ENCODE measurements at regions of chr1 and their contacts with region 1.

Region 1: DNA sequence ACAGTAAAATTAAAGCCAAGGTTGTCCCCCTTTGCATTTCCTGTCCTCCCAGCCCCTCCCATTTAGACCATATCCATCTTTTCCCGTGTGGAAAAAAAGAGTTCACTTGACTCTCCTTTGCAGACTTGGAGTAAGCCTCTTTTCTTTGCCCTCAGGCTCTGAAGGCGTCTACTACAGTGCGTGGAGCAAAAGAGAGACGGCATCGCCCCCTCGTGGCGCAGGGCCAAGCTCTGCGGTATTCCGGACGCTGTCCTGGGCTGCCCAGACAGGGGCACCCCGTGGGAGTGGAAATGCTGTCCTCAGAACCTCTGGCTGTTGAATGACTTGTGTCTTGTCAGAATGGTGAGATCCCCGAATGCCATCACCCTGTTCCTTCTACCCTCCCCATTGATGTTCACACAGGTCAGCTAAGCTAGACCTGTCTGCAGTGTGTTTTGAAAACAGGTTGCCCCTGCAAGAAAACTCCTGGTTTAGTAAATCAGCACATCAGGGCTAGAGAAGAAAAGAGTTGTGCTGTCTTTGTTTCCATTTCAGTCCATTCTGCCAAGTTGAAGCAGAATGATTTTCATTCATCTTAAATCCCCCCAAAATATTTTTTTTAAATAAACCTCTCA is 12.3 kb upstream of the GJA8 start:
- DNase-seq: peak; percentile 68
- H3K4me3 ChIP-seq: no peak overlapping the region
- H3K27ac ChIP-seq: no peak overlapping the region
- H3K4me1 ChIP-seq: no peaks in the 10 kb centered on the region
- H3K27me3 ChIP-seq: no peaks in the 10 kb centered on the region
- CTCF ChIP-seq: peak; percentile 52

Region 2: GRCh38 chr1:147273409-147274336 is 616.6 kb before region 1 on chr1:
- intact Hi-C with region 1: loop called (anchors 5 kb)
- DNase-seq: peak; percentile 26
- H3K4me3 ChIP-seq: no peak overlapping the region
- H3K27ac ChIP-seq: no peak overlapping the region
- H3K4me1 ChIP-seq: no peaks in the 10 kb centered on the region
- H3K27me3 ChIP-seq: no peaks in the 10 kb centered on the region
- CTCF ChIP-seq: peak; percentile 44

Region 3: DNA sequence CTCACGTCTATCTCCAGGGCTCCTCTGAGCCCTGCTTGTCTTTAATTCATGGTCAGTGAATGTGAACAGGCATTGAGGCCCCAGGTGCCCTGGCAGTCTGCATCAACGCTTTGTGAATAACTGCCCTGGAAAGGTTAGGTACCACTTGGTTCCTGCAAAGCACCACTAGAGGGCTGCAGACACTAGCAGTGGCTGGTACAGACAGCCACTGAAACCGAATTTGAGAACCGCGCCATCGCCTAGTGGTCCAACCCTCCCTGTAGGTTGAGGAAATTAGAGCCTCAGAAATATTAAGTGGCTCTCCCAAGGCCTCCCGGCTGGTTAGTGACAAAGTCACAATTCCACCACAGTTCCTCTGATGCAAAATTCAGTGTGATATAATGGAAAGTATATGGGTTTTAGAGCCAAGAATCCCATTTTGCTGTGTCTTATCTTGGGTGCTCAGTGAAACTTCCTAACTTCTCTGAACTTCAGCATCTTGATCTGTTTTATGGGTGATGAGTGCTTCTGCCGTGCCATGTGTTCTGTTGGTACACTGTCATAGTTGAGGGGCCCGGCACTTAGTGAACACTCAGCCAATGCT is 395.2 kb before region 1 on chr1:
- intact Hi-C with region 1: loop called (anchors 5 kb)
- DNase-seq: peak; percentile 74
- H3K4me3 ChIP-seq: no peak overlapping the region
- H3K27ac ChIP-seq: no peak overlapping the region
- H3K4me1 ChIP-seq: no peaks in the 10 kb centered on the region
- H3K27me3 ChIP-seq: no peaks in the 10 kb centered on the region
- CTCF ChIP-seq: peak; percentile 91

Region 4: DNA sequence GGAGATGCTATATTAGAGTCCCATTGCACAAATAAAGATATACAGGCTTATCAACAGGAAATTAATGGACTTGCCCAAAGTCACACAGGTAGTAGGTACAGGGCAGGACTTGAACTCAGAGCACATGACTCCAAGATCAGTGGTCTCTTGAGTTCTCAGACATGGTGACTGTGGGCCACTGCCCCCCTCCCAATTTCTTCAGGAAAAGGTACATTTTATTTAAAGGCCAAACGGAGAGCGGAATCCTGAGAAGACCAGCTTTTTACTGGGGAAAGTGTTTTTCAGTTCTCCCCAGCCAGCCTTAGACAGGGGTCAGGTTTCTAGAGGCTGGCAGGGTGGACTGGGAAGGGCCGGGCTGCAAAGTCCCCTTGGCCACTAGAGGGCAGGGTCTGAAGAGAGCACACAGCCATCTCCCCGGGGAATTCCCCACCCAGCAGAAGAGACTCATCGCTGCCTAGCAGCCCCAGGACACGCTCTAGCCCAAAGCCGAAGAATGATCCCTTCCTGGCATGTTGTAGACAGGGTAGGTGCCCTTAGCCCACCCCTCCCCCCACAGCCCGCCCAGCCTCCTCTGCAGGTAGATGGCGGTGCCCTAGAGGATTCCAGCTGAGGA is 249.6 kb before region 1 on chr1:
- intact Hi-C with region 1: loop called (anchors 2 kb)
- DNase-seq: peak; percentile 72
- H3K4me3 ChIP-seq: no peak overlapping the region
- H3K27ac ChIP-seq: no peak overlapping the region
- H3K4me1 ChIP-seq: no peaks in the 10 kb centered on the region
- H3K27me3 ChIP-seq: no peaks in the 10 kb centered on the region
- CTCF ChIP-seq: peak; percentile 86

Region 5: DNA sequence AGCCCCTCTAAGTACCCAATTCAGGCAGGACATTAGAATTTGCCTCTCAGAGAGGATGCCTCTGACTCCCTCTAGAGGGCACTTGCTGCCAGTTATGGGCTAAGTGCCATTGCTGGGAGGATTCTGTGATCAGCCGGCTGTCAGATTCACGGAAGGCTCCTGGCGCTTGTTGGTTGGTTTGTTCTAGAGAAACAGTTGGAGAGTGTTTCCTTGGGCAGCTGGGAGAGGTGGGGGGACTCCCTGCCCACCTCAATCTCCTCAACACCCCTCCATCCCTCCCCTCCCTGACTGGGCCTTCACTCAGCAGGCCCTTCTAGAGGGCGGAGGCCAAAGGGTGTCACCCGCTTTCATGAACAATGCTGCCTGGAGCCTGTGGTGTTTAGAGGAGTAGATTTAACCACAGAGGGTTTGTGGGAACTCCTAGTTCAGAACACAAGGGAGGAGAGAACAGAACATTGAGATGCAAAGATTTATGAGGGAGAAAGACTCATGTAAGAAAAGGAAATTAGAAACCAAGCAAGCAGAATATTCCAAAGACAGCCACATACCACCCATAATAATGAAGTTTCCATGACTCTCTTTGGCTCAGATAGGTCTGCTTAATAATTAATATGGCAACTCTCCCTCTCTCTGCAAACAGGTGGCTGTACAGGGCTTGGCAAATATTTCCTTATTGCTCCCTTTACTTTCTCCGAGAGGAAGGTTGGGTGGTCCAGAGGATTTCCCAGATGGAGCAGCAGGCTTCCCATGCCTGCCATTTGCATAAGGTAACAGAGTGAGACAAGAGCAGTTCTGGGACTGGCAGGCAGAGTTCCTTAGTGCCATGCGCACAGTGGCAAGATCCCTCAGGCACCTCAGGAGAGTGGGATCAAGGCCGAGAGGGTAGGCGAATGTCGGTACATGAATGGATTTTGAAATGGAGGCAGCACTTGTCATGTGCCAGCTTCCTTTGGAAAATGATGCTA is 190.0 kb before region 1 on chr1:
- intact Hi-C with region 1: loop called (anchors 5 kb)
- DNase-seq: peak; percentile 76
- H3K4me3 ChIP-seq: no peak overlapping the region
- H3K27ac ChIP-seq: no peak overlapping the region
- H3K4me1 ChIP-seq: no peaks in the 10 kb centered on the region
- H3K27me3 ChIP-seq: no peaks in the 10 kb centered on the region
- CTCF ChIP-seq: peak; percentile 72

Region 6: DNA sequence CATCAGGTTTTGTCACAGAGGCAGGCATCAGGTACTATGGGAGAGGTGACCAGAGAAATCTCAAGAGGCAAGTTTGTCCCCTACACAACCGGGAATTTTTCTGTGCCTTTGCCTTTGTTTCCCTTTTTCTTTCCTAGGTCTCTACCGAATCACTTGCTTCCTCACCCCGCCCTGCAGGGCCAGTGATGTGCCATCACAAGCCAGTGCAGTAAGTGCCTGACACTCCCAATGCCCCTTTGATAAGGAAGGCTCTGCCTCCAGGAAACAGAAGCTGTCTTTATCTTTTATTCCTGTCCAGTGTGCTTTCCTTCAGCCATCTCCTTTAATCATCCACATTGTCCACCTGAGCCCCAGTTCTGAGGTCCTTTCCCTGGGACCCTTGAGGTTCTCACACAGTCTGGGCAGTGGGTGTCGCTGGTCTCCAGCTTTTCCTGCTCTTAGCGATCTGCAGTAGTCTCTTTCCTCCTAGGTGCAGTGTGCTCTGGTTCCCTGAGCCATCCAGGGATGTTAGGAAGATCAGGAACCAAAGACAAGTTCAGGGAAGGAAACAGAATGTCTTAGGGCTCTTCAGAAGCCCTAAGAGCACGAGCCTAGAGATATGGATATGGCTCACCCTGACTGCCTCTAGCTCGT is 166.5 kb before region 1 on chr1:
- intact Hi-C with region 1: loop called (anchors 10 kb)
- DNase-seq: peak; percentile 44
- H3K4me3 ChIP-seq: no peak overlapping the region
- H3K27ac ChIP-seq: no peak overlapping the region
- H3K4me1 ChIP-seq: peaks cover 4% of the 10 kb centered on the region
- H3K27me3 ChIP-seq: no peaks in the 10 kb centered on the region
- CTCF ChIP-seq: no peak

Measured in colonic mucosa (tissue), 4 donors.